PC-3 (cell line): ENCODE measurements at regions of chr17 and their contacts with region 1.

Region 1: DNA sequence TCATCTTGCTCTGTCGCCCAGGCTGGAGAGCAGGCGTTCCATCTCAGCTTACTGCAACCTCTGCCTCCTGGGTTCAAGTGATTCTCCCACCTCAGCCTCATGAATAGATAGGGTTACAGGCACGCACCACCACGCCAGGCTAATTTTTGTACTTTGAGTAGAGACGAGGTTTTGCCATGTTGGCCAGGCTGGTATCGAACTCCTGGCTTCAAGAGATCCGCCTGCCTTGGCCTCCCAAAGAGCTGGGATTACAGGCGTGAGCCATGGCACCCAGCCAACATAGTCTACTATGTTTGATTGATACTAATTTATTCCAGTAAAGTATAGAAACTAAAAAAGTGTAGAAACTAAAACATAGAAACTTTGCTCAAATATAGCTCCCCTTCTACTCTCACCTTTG is 94.9 kb downstream of the CA4 start:
- DNase-seq: no peak
- ATAC-seq: no peak
- H3K4me3 ChIP-seq: no peak overlapping the region
- H3K27ac ChIP-seq: no peak overlapping the region
- H3K4me1 ChIP-seq: no peaks in the 10 kb centered on the region
- H3K27me3 ChIP-seq: no peaks in the 10 kb centered on the region
- CTCF ChIP-seq: no peak

Region 2: DNA sequence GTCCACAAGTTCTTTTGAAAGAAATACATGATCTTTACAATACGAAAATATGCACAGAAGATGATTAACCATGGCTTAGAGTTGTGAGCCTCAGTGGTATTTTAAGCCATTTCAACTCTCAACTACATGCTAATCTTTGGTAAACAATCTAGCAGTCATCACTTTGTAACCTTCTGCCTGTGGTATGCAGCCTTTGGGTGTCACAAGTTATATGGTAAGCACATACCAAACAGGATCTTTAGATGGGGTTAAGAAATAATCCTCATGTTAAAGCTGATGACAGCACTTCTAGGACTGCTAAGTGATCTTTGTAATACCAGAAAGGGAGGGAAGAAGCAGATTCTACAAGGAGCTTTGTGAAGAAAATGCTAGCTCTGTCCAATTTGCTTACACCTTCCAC is 20.6 kb before region 1 on chr17:
- CTCF ChIA-PET with region 1: no interaction called
- POLR2A ChIA-PET with region 1: no interaction called
- intact Hi-C with region 1: no loop called
- DNase-seq: no peak
- ATAC-seq: no peak
- H3K4me3 ChIP-seq: no peak overlapping the region
- H3K27ac ChIP-seq: no peak overlapping the region
- H3K4me1 ChIP-seq: no peaks in the 10 kb centered on the region
- H3K27me3 ChIP-seq: no peaks in the 10 kb centered on the region
- CTCF ChIP-seq: no peak

Region 3: GRCh38 chr17:60303406-60304099 is 58.9 kb after region 1 on chr17:
- CTCF ChIA-PET with region 1: no interaction called
- POLR2A ChIA-PET with region 1: interaction called, 10 read pairs
- intact Hi-C with region 1: no loop called
- DNase-seq: no peak
- ATAC-seq: no peak
- H3K4me3 ChIP-seq: no peak overlapping the region
- H3K27ac ChIP-seq: no peak overlapping the region
- H3K4me1 ChIP-seq: no peaks in the 10 kb centered on the region
- H3K27me3 ChIP-seq: no peaks in the 10 kb centered on the region
- CTCF ChIP-seq: no peak